Right ventricle myocardium inferior (tissue), 1 donor: ENCODE measurements at regions of chr5 and their contacts with region 1.

Region 1: DNA sequence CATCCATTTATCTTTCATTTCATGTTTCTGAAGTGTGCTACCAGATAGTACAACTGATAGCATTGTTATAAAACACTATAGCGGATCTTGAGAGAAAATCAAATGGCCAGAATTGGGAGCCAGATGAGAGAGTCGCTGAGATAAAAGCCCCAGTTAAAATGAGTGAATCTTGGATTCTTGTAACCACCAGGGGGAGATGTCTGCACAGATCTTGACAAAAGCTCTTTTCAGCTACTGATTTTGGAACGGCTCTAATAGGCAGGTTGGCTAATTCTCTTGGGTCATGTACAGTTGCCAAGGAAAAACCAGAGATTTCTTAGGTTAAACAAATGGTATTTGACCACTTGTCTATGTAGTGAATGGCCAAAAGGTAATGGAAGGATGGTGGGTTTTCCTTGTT is 21.7 kb downstream of the F2RL2 start:
- DNase-seq: no peak
- ATAC-seq: peak; percentile 59

Region 2: DNA sequence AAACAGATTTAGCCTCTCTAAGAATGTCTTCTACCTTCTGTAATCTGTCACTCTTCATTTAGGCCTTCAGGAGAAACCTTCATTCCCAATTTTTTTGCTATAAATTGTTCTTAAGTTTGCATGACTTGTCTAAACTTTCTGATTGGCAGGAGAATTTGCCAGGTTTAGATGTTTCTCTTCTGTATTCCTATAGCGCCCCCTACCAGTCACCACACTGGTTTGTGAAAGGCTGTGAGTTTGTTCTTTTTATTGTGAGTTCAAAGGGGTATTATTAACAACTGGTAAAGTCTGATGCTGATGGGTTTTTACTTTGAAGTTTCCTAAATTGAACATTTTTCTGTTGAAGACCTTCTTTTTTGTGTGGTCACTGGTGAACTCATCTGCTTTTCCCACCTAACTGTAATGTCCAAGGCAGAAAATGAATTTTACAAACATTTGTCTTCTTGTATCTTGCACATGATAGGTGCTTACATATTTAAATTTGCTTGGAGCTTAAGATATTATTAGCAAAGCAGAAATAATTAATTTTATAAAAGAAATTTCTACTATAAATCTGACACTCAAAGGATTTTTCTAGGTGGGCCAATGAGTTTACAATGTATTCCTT is 40.1 kb after region 1 on chr5:
- intact Hi-C with region 1: loop called (anchors 5 kb)
- DNase-seq: no peak
- ATAC-seq: no peak

Region 3: DNA sequence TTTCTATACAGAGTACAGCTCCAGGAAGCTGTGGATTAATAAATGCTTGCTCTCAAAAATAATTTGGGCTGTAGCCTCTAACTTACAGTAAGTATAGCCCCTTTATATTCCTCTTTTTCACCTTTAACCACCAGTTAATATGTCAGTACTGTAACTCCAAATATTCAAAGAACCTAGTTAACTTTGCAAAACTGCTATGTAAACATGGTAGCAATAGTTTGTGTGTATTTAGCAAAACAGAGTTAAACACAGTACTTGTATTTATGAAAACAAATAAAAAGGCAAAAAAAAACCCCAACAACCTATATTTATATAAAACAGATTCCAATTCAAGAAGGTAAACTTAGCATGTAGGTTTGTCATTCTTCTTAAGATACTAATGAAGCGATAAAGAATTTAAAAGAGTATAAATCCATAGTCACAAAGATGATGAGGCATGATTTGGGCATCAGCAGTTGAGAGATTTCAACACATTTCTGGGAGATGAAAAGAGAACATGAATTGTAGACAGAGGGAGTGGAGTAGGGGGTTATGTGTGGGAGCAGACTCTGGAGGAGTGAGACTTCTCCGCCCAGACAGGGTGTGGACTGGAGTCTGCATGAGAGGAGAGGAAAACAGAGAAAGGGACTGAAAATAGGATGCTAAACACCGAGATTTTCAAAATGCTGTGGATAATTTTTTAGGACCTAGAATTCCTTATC is 170.4 kb after region 1 on chr5:
- intact Hi-C with region 1: loop called (anchors 1 kb)
- DNase-seq: no peak
- ATAC-seq: no peak

Region 4: GRCh38 chr5:77015938-77016569 is 414.6 kb after region 1 on chr5:
- intact Hi-C with region 1: loop called (anchors 5 kb)
- DNase-seq: no peak
- ATAC-seq: no peak

Region 5: DNA sequence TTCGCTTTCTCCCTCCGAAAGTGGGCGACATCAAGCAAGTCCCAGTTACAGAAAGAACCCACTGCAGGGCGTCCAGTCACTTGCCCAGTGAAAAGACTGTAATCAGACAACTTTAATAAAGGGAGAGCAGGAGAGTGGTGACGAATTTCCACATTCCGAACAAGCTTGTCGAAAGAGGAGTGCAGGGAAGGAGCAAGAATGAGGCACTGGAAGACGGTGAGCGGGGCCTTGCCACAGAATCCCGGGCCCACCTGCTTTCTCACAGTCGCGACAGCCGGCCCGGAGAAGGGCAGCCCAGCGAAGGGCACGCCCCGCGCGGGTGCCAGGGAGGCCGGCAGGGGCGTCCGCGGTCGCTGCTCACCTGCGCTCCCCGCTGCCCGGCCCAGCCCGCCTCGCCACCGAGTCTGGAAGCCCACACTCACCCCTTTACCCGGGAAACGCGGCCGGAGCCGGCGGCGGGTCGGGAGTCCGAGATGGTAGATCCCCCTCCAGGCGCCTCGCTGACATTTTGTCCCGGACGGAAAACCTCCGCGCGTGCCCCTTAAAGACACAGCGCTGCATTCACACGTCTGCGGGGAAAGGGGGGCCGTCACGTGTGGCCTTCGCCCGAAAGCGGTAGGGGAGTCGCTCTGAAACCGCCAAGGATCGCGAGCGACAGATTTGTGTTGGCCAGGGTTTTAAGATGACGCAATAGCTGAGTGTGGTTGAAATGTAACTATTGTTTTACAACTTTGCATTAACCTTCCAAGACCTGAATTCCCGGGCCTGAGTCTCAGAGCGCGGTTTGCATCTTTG is 485.4 kb after region 1 on chr5 and contains the start of gene ZBED3:
- intact Hi-C with region 1: no loop called
- DNase-seq: peak; percentile 82
- ATAC-seq: peak; percentile 83
- total RNA-seq, gene ZBED3: 6.5 TPM